Right ventricle myocardium superior (tissue), 1 donor: ENCODE measurements at regions of chr15 and their contacts with region 1.

Region 1: GRCh38 chr15:74768771-74769342 is 13.0 kb upstream of the CSK start:
- DNase-seq: peak; percentile 69
- ATAC-seq: peak; percentile 62

Region 2: DNA sequence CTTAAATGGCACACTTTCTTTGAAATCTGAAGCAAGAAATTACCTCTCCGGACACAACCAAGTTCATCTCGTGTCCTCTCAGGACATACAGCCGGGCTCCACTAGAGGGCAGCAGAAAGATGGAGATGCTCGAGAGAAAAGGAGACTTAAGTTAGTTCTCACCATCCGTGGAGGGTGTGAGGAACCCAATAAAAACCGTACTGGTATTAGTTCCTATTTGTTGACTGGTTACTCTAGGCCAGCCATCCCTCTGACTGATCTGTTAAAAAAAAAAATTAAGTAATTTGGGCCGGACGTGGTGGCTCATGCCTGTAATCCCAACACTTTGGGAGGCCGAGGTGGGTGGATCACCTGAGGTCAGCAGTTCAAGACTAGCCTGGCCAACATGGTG is 393.6 kb before region 1 on chr15:
- intact Hi-C with region 1: loop called (anchors 5 kb)
- DNase-seq: peak; percentile 86
- ATAC-seq: peak; percentile 72

Region 3: DNA sequence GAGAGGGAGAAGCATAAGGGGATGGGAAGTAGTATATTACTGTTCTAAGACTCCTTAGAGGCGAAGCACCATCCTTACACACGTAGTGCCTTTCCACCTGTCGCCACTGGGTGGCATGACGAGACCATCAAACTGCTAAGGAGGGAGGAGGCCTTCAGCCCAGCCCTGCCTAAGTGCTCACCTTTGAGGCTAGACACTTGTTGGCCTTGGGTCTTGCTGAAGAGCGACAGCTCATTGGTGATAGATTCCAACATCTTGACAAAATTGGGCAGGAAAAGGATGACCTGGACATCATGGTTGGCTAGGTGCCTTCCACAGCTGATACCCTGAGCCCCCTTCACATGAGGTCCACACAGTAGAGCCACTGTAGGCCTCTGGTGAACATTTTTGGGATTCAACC is 133.6 kb before region 1 on chr15:
- intact Hi-C with region 1: loop called (anchors 2 kb)
- DNase-seq: peak; percentile 66
- ATAC-seq: peak; percentile 74

Region 4: GRCh38 chr15:74950078-74951000 is 181.5 kb after region 1 on chr15:
- intact Hi-C with region 1: loop called (anchors 2 kb)
- DNase-seq: peak; percentile 60
- ATAC-seq: peak; percentile 81

Region 5: DNA sequence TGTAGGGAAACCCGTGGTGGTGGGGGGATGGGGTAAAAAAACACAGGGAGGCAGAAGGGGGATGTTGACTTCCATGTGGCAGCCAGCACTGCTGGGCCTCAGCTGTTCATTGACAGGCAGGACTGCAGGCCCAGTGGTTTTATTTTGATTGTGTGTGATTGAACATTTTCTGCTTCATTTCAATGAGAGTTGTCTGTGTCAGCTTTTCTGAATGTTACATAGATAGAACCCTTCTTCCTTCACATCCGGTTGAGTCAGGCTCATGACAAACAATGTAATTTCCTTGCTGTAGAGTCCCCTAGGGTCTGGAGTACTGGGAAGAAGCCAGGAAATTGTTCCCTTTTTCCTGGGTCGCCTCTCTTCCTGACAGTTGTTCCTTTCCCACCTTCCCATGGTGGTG is 195.9 kb after region 1 on chr15:
- intact Hi-C with region 1: no loop called
- DNase-seq: no peak
- ATAC-seq: peak; percentile 15